ENCODE measurements at regions of chr9 and their contacts with region 1.

Region 1: DNA sequence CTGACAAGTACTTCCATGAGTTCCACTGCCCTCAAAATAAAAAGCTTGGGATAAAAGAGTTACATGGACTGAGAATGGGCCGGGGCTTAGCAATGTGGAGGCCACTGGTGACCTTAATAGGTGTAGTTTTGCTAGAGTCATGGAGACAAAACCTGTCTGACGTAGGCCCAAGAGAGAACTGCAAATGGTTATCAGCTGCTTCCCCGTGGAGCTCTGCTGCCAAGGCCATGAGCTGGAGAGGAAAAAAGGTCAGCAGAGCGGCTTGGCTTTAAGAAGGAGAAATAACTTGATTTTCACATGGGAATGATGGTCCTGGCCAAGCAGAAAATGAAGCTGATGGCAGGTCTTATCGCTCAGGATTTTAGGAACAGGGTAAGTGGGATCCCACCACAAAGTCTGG is 3.7 kb upstream of the SURF6 start:
- DNase-seq: no peak
- ATAC-seq: no peak
- H3K4me3 ChIP-seq: no peak overlapping the region
- H3K27ac ChIP-seq: no peak overlapping the region
- H3K4me1 ChIP-seq: peaks cover 2% of the 10 kb centered on the region
- H3K27me3 ChIP-seq: no peaks in the 10 kb centered on the region
- CTCF ChIP-seq: no peak

Region 2: GRCh38 chr9:133290751-133291302 is 48.8 kb before region 1 on chr9:
- CTCF ChIA-PET with region 1: no interaction called
- POLR2A ChIA-PET with region 1: interaction called, 14 read pairs
- in situ Hi-C with region 1: no loop called
- intact Hi-C with region 1: no loop called
- DNase-seq: no peak
- ATAC-seq: no peak
- H3K4me3 ChIP-seq: no peak overlapping the region
- H3K27ac ChIP-seq: no peak overlapping the region
- H3K4me1 ChIP-seq: no peaks in the 10 kb centered on the region
- H3K27me3 ChIP-seq: peaks cover 7% of the 10 kb centered on the region
- CTCF ChIP-seq: no peak

Region 3: GRCh38 chr9:133351908-133352634 is 12.4 kb after region 1 on chr9:
- CTCF ChIA-PET with region 1: no interaction called
- POLR2A ChIA-PET with region 1: no interaction called
- in situ Hi-C with region 1: no loop called
- intact Hi-C with region 1: no loop called
- DNase-seq: no peak
- ATAC-seq: peak; percentile 57
- H3K4me3 ChIP-seq: no peak overlapping the region
- H3K27ac ChIP-seq: no peak overlapping the region; the same call in 1 of the 2 replicates
- H3K4me1 ChIP-seq: peaks cover 15% of the 10 kb centered on the region
- H3K27me3 ChIP-seq: no peaks in the 10 kb centered on the region
- CTCF ChIP-seq: peak; percentile 77

Measured in Panc1 (cell line).